Cardiac septum (tissue), 1 donor: ENCODE measurements at regions of chr4 and their contacts with region 1.

Region 1: DNA sequence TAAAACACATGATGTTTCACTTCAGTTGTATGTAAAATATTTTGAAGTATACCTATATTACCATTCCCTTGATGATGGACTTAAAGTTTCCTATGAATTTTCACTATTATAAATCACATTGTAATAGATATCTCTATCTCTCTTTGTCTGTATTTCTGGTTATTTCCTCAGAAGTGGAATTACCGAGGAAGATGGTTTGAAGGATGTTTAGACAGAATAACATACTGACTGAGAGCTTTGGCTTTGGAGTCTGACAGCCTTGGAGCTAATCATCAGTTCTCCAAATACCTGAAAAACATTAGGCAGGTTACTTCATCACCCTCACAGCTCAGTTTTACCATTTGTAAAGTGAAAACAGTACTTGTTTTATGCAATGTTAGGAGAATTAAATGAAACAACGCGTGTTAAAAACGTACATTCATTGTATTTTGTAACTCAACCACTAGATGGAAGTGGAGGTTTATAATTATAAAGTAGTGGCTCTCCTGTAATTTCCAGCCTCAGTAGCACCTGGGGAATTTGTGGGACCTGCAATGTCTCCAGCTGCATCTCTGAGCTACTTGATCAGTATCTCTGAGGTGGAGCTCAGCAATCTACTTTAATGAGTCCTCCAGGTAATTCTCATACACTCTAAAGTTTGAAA is 14.3 kb downstream of the JCHAIN start:
- DNase-seq: no peak

Region 2: DNA sequence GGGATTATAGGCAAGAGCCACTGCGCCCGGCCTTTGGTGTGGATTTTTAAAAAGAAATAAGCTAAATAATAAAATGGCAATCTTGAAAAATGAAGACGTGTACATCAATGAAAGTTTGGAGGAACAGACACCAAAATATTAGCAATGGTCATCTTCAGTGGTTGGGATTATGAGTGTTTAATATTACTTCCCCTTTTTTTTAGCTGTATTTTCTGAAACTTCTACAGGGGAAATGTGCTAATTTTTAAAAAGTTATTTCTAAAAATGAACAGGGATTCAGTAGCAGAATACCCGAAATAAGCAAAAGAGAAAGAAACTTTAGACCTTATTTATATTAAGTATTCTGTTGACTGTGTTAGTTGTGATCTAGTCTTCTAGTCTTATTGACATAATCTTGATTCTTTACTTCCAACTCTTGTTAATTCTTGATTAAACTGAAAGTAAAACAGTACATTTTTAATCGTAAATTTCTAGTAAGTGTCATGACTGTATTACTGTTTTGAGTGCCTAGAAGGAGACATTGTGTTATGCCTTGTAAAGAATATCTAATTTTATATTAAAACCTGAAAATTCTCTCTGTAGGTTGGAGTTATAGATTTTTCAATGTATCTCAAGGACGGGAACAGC is 121.1 kb after region 1 on chr4:
- intact Hi-C with region 1: no loop called
- DNase-seq: no peak

Region 3: DNA sequence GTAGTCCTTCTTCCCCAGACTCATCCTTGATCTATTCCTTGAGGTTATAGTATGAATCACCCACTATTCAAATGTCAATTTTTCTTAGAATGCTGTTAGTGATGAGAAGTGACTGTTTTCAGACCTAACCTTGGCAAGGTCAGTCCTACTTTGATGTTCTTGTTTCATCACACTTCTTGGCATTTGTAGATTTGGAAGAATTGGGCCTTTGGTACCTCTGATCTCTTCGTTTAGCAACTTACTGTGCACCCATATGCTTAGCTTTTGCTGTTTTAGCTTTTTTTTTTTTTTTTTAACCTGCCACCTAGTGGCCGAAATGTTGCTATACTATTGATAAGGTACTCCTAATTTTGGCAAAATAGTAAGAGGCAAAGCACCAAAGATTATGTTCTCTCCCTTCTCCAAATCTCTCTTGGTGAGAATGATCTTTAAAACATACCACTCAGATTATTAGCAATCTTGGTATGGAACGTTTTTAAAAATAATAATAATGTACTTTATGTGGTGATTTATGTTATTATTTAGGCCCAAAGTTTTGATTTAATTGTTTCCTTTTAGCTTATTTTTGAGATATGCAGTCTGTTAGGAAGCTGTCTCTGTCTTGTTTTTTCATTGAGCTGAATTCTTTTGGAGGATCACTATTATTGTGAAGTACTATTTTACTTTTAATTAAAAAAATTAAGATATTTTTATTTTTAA is 358.1 kb after region 1 on chr4:
- intact Hi-C with region 1: loop called (anchors 5 kb)
- DNase-seq: no peak

Region 4: GRCh38 chr4:71713611-71714203 is 1061.7 kb after region 1 on chr4:
- intact Hi-C with region 1: loop called (anchors 10 kb)
- DNase-seq: no peak